PC-9 (cell line): ENCODE measurements at regions of chr20 and their contacts with region 1.

Region 1: GRCh38 chr20:44733341-44734069 is 12.2 kb upstream of the KCNK15 start:
- DNase-seq: peak; percentile 55 to 78
- H3K4me3 ChIP-seq: no peak overlapping the region
- H3K27ac ChIP-seq: no peak overlapping the region
- H3K4me1 ChIP-seq: peaks cover 45% of the 10 kb centered on the region
- H3K27me3 ChIP-seq: no peaks in the 10 kb centered on the region
- CTCF ChIP-seq: peak; percentile 96

Region 2: GRCh38 chr20:44609511-44610312 is 123.8 kb before region 1 on chr20:
- CTCF ChIA-PET with region 1: no interaction called
- POLR2A ChIA-PET with region 1: no interaction called
- intact Hi-C with region 1: loop called (anchors 2 kb)
- DNase-seq: peak; percentile 85 to 91
- H3K4me3 ChIP-seq: no peak overlapping the region
- H3K27ac ChIP-seq: 0 out of 2 replicates have a peak overlapping the region, but pooled peaks have one; percentile 0
- H3K4me1 ChIP-seq: peaks cover 7% of the 10 kb centered on the region
- H3K27me3 ChIP-seq: no peaks in the 10 kb centered on the region
- CTCF ChIP-seq: peak; percentile 99

Region 3: DNA sequence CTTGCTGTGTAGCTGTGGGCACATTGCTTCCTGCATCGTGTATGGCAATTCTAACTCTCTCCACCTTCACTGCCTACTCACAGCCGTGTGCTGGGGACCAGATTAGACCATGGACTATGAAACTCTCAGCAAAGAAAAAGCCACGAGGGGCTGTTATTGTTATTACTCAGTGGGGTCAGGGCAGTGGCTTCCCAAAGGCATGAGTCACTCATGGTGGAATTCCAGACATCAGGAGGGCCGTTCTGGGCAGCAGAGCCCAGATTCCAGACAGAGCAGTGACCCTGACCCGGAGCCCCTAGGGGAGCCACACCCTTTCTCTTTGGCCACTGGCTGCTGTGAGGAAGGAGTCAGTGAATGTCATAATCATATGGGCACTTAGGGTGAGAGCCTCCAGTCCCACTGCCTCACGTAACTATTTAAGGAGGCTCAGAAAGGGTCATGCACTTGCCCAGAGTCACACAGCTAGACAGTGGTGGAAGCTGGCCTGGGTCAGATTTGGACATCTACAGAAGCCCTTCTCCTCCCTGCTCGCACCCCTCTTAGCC is 40.5 kb before region 1 on chr20:
- CTCF ChIA-PET with region 1: interaction called, 5 read pairs
- POLR2A ChIA-PET with region 1: no interaction called
- intact Hi-C with region 1: loop called (anchors 1 kb)
- DNase-seq: peak; percentile 93 to 97
- H3K4me3 ChIP-seq: no peak overlapping the region
- H3K27ac ChIP-seq: peak overlapping the region; percentile 65
- H3K4me1 ChIP-seq: peaks cover 20% of the 10 kb centered on the region
- H3K27me3 ChIP-seq: no peaks in the 10 kb centered on the region
- CTCF ChIP-seq: no peak

Region 4: GRCh38 chr20:44720617-44720993 is 12.9 kb before region 1 on chr20:
- CTCF ChIA-PET with region 1: interaction called, 11 read pairs
- POLR2A ChIA-PET with region 1: no interaction called
- intact Hi-C with region 1: loop called (anchors 1 kb)
- DNase-seq: peak; percentile 71 to 83
- H3K4me3 ChIP-seq: no peak overlapping the region
- H3K27ac ChIP-seq: peak overlapping the region; percentile 40
- H3K4me1 ChIP-seq: peaks cover 22% of the 10 kb centered on the region
- H3K27me3 ChIP-seq: no peaks in the 10 kb centered on the region
- CTCF ChIP-seq: no peak

Region 5: GRCh38 chr20:44942264-44942973 is 208.9 kb after region 1 on chr20:
- CTCF ChIA-PET with region 1: no interaction called
- POLR2A ChIA-PET with region 1: no interaction called
- intact Hi-C with region 1: no loop called
- DNase-seq: no peak
- H3K4me3 ChIP-seq: no peak overlapping the region
- H3K27ac ChIP-seq: no peak overlapping the region
- H3K4me1 ChIP-seq: no peaks in the 10 kb centered on the region
- H3K27me3 ChIP-seq: no peaks in the 10 kb centered on the region
- CTCF ChIP-seq: no peak